ENCODE measurements at regions of chr17 and their contacts with region 1.

Region 1: DNA sequence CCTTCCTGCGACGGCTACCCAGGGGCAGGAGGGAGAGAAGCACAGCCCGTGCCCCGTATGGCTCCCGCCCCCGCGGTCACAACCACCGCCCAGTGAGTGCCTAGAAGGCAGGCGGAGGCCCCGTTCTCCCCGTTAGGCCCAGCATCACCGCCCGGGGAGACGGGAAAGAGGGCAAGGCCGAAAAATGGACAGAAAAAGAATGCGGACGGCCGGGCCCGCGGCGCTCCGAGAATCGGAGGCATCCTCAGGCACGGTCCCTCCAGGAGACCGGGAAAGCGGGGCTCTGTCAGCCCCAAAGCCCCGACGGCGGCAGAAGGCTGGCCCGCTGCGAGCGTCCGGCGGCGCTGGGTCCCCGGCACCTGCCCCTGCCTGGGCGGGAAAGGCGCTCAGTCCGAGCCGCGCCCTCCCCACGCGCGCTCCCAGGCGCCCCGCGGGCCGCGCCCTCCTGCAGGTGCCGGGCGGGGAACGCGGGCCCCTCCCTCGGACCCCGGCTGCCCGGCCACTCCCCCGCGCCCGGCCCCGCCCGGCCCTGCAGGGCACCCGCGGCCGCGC is 407 bp downstream of the MCRIP1 start:
- H3K4me3 Mint-ChIP-seq: peak overlapping the region; percentile 90
- H3K27ac Mint-ChIP-seq: peak overlapping the region; percentile 97
- H3K4me1 Mint-ChIP-seq: peaks cover 61% of the 10 kb centered on the region
- H3K27me3 Mint-ChIP-seq: no peaks in the 10 kb centered on the region

Region 2: GRCh38 chr17:81821603-81822311 is 10.9 kb before region 1 on chr17:
- intact Hi-C with region 1: loop called (anchors 1 kb)
- H3K4me3 Mint-ChIP-seq: peak overlapping the region; percentile 48
- H3K27ac Mint-ChIP-seq: peak overlapping the region; percentile 95
- H3K4me1 Mint-ChIP-seq: peaks cover 43% of the 10 kb centered on the region
- H3K27me3 Mint-ChIP-seq: peaks cover 17% of the 10 kb centered on the region